ENCODE measurements at regions of chr17 and their contacts with region 1.

Region 1: GRCh38 chr17:69093279-69093789 is 32.6 kb upstream of the ABCA9 start:
- DNase-seq: no peak
- ATAC-seq: peak in 1 of 4 donors; percentile 52
- H3K4me3 ChIP-seq: no peak overlapping the region
- H3K27ac ChIP-seq: peak overlapping the region in 5 of 12 donors; percentile 12 to 85 (median 38)
- H3K4me1 ChIP-seq: peaks cover 0 to 36% (median 0%) of the 10 kb centered on the region in 12 donors
- H3K27me3 ChIP-seq: no peaks in the 10 kb centered on the region
- CTCF ChIP-seq: no peak
- POLR2A ChIP-seq: no peak

Region 2: DNA sequence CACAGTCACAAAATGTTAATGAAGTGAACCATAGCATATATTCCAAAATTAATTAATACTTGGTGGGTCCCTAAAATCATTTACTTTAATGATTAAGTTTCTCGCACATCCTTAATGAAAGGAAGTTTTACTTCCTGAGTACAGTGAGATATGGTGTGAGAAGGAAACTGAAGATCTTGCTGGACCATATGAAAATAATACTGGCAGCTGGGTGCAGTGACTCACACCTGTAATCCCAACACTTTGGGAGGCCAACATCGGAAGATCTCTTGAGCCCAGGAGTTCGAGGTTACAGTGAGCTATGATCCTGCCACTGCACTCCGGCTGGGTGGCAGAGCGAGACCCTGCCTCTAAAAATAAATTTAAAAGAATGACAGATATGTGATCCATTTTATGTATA is 200.7 kb before region 1 on chr17:
- intact Hi-C with region 1: no loop called
- DNase-seq: no peak
- ATAC-seq: no peak
- H3K4me3 ChIP-seq: no peak overlapping the region
- H3K27ac ChIP-seq: no peak overlapping the region
- H3K4me1 ChIP-seq: no peaks in the 10 kb centered on the region
- H3K27me3 ChIP-seq: no peaks in the 10 kb centered on the region
- CTCF ChIP-seq: no peak
- POLR2A ChIP-seq: no peak

Region 3: DNA sequence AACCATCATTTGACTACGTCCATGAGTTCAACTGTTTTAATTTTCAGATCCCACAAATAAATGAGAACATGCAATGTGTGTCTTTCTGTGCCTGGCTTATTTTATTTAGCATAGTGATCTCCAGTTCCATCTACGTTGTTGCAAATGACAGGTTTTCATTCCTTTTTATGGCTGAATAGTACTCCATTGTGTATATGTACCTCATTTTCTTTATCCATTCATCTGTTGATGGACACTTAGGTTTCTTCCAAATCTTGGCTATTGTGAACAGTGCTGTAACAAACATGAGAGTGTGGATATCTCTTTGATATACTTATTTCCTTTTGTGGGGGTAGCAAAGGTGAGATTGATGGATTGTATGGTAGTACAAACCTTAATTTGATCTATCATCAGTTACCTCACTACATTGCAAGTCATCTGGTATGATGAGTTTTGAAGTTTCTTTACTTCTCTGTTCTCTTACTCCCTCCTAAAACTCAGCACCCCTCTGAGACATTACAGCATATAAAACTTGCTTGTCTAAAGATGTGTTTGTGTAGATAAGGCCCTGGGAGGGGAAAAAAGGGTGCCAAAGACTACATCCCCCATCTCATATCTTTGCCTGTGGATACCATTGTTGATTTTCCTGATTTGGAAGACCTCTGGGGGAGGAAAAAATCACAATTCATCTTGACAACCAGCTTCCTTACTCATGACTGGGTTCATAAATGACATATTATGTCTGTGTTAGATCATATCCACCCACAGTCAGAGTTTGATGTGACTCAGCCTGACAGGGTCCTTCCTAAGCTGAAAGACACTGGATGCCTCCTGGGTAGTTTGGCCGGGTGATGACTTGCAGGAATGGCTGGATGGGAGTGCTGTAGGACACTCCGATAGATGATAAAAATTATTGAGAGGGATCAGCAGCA is 80.2 kb before region 1 on chr17:
- intact Hi-C with region 1: no loop called
- DNase-seq: no peak
- ATAC-seq: peak in 1 of 4 donors; percentile 82
- H3K4me3 ChIP-seq: no peak overlapping the region
- H3K27ac ChIP-seq: no peak overlapping the region
- H3K4me1 ChIP-seq: no peaks in the 10 kb centered on the region
- H3K27me3 ChIP-seq: no peaks in the 10 kb centered on the region
- CTCF ChIP-seq: no peak
- POLR2A ChIP-seq: no peak

Region 4: GRCh38 chr17:69047368-69048263 is 45.7 kb before region 1 on chr17:
- intact Hi-C with region 1: loop called in 1 of 10 experiments (anchors 10 kb)
- DNase-seq: peak; percentile 48 to 72 (median 63)
- ATAC-seq: peak; percentile 78 to 95 (median 94)
- H3K4me3 ChIP-seq: no peak overlapping the region
- H3K27ac ChIP-seq: peak overlapping the region; percentile 53 to 78 (median 64)
- H3K4me1 ChIP-seq: peaks cover 0 to 32% (median 11%) of the 10 kb centered on the region in 12 donors
- H3K27me3 ChIP-seq: no peaks in the 10 kb centered on the region
- CTCF ChIP-seq: no peak
- POLR2A ChIP-seq: no peak